Uterus (tissue), 4 donors: ENCODE measurements at regions of chr1 and their contacts with region 1.

Region 1: GRCh38 chr1:210143465-210144062 is 89.0 kb upstream of the SERTAD4 start:
- DNase-seq: peak; percentile 64 to 81
- H3K4me3 ChIP-seq: no peak overlapping the region
- H3K27ac ChIP-seq: no peak overlapping the region
- H3K4me1 ChIP-seq: no peaks in the 10 kb centered on the region
- H3K27me3 ChIP-seq: no peaks in the 10 kb centered on the region
- CTCF ChIP-seq: peak; percentile 54 to 72 (median 64)
- POLR2A ChIP-seq: no peak

Region 2: GRCh38 chr1:209900734-209901133 is 242.8 kb before region 1 on chr1:
- intact Hi-C with region 1: no loop called
- DNase-seq: no peak
- H3K4me3 ChIP-seq: no peak overlapping the region
- H3K27ac ChIP-seq: no peak overlapping the region
- H3K4me1 ChIP-seq: no peaks in the 10 kb centered on the region
- H3K27me3 ChIP-seq: no peaks in the 10 kb centered on the region
- CTCF ChIP-seq: no peak
- POLR2A ChIP-seq: no peak

Region 3: GRCh38 chr1:209911746-209912145 is 231.8 kb before region 1 on chr1:
- intact Hi-C with region 1: no loop called
- DNase-seq: no peak
- H3K4me3 ChIP-seq: no peak overlapping the region
- H3K27ac ChIP-seq: no peak overlapping the region
- H3K4me1 ChIP-seq: no peaks in the 10 kb centered on the region
- H3K27me3 ChIP-seq: no peaks in the 10 kb centered on the region
- CTCF ChIP-seq: no peak
- POLR2A ChIP-seq: no peak

Region 4: DNA sequence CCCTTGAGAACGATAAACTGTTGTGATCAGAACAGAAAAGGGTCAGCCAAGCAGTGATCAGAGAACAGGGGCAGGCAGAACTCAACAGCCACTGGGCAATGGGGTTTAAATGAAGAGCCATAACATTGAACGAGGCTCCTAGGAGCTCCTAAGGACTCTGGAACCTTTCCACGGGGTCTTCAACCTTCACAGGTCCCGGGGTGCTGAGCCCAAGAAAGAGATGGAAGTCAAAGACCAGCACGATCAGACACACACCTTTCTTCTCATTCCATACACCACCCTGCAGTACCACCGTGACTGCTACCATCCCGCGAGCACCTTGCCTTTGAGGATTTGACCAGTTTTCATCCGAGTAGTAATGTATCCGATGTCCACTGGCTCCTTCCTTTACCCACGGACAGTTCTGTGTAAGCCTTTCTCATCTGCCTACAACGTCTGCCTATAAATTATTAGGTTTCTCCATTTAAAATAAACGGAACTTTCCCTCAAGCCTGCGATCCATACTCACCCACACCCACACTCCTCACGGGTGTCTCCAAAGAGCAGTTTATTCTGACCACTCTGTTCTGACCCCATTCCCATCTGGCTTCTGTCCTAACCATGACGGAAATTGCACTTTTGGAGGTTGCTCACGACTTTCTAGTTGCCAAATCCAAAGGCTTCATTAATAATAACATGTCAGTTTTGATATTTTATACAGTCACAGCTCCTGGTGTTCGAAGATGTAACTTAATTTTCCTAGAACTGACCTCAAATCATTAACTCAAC is 168.3 kb after region 1 on chr1:
- intact Hi-C with region 1: loop called (anchors 10 kb)
- DNase-seq: no peak
- H3K4me3 ChIP-seq: no peak overlapping the region
- H3K27ac ChIP-seq: peak overlapping the region; percentile 57 to 74
- H3K4me1 ChIP-seq: no peaks in the 10 kb centered on the region
- H3K27me3 ChIP-seq: no peaks in the 10 kb centered on the region
- CTCF ChIP-seq: no peak
- POLR2A ChIP-seq: no peak

Region 5: DNA sequence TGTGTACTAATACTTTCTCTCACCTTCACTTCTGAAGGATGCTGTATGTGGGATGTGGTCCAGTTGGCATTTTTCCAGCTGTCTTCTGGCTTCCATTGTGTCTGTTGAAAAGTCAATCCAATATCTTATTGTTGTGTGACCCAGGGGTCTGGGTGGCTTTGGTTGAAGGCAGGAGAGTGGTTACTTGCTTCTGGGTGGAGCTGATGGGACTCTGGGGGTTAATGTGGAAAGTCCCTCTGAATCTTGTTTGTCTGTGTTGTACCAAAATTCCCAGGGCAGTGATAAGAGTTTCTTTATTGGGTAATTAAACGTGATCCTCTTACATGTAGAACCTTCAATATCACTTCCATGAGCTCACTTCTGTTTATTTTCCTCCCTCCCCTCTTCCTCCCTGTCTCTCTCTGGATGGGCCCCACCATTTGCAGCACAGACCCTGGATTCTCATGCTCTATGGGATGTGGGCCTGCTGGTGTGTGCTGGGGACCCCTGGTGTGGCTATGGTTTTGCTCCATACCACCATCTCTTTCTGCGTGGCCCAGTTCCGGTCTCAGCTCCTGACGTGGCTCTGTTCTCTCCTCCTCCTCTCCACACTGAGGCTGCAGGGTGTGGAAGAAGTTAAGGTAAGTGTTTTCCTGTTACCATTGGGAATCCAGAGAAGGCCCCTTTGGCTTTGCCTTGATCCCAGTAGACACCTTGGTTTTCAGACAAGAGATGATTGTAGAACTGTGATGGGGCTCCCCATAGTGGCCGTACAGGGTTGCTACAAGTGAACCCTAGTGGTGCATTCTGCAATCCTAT is 256.7 kb after region 1 on chr1:
- intact Hi-C with region 1: loop called (anchors 5 kb)
- DNase-seq: peak; percentile 26 to 34
- H3K4me3 ChIP-seq: no peak overlapping the region
- H3K27ac ChIP-seq: no peak overlapping the region
- H3K4me1 ChIP-seq: no peaks in the 10 kb centered on the region
- H3K27me3 ChIP-seq: no peaks in the 10 kb centered on the region
- CTCF ChIP-seq: peak; percentile 36 to 71 (median 66)
- POLR2A ChIP-seq: no peak